GM10248 (cell line): ENCODE measurements at regions of chr7 and their contacts with region 1.

Region 1: GRCh38 chr7:112869111-112869757 is 79.0 kb upstream of the TMEM168 start:
- DNase-seq: peak; percentile 41
- CTCF ChIP-seq: peak; percentile 80

Region 2: DNA sequence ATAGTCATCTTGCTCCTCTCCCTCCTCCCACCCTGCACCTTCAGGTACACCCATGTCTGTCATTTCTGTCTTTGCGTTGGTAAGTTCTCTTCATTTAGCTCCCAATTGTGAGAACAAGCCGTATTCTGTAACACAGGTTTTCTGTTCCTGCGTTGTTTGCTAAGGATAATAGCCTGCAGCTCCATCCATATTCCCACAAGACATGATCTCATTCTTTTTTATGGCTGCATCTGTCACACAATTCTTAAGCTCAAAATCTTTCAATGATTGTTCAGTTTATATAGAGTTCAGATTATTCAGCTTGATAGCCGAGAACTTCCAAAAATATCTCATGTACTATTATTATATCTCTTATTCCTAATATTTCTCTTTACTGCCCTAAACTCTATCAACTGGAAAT is 63.1 kb before region 1 on chr7:
- CTCF ChIA-PET with region 1: no interaction called
- POLR2A ChIA-PET with region 1: no interaction called
- DNase-seq: no peak
- CTCF ChIP-seq: no peak

Region 3: DNA sequence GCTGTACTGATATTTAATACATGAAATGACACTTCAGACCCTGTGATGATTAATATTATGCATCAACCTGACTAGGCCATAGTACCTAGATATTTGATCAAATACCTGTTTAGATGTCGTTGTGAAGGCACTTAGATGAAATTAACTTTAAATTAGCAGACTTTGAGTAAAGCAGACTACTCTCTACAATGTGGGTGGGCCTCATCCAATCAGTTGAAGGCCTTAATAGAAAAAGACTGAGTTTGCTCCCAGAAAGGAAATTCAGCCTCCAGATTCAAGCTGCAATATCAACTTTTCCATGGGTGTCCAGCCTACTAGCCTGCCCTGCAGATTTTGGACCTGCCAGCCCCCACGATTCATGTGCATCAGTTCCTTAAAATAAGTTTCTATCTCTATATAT is 10.4 kb before region 1 on chr7:
- CTCF ChIA-PET with region 1: interaction called, 18 read pairs
- POLR2A ChIA-PET with region 1: no interaction called
- DNase-seq: no peak
- CTCF ChIP-seq: no peak

Region 4: DNA sequence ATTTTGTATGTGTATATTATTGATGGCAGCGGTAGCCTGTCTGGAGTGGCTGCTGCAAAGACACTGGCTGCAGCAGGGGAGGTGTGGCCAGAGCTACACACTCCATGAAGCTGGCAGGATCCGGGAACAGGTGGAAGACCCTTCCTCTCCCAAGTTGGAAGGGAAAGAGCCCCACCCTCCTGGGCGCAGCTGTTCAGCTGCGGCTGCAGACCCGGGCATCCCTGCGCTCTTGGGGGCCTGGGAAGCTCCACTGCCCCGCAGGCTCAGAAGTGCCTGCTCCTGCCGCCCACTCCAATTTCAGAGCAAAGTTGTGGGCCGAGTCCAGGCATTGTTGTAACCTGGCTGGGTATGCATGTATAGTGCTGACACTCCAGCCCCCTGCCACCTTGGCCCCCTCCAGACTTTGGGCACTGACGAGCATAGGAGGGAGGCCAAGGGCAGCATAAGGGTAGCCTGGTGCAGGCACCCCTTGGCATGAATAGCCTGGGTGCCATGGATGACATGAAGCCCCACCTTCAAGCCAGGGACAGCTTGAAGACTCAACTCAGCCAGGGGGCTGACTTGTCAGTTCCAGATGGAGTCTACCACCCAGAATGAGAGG is 11.7 kb after region 1 on chr7:
- CTCF ChIA-PET with region 1: interaction called, 12 read pairs
- POLR2A ChIA-PET with region 1: no interaction called
- DNase-seq: no peak
- CTCF ChIP-seq: no peak

Region 5: GRCh38 chr7:113040849-113041248 is 171.6 kb after region 1 on chr7:
- CTCF ChIA-PET with region 1: no interaction called
- POLR2A ChIA-PET with region 1: no interaction called
- DNase-seq: no peak
- CTCF ChIP-seq: no peak